ENCODE measurements at regions of chrX and their contacts with region 1.

Region 1: DNA sequence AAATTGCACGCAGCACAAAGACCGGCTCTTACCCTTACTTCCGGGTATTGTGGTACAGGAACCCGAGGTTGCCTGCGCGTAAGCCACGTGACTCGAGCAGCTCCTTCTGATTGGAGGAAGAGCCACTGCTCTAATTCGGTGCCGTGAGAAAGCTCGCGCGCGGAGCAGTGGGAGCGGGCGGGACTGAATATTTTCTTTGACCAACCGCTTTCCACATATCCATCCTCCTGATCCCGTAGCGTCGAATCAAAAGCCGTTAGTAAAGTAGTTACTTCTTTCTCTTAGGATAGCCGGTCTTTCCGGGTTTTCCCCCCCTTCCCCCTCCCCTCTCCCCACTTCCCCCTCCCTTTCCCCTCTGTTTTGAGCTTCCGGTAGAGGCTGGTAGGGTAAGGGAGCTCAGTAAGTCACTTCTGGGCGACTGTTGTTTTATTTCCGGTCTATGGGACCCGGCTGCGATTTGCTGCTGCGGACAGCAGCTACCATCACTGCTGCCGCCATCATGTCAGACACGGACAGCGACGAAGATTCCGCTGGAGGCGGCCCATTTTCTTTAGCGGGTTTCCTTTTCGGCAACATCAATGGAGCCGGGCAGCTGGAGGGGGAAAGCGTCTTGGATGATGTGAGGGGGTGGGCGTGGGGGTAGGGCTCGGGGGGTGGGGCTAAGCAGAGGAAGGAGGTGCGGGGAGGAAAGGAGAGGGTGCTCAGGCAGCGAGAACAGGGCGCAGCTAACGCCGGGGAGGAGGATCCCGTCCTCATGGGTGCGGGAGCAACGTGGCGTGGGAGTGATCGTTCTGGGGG is at the start of gene TAF1:
- DNase-seq: peak; percentile 74 to 97 (median 90)
- ATAC-seq: peak; percentile 89 to 91
- H3K4me3 Mint-ChIP-seq: peak within 1 kb of the TSS; percentile 90 to 99 (median 98)
- H3K27ac Mint-ChIP-seq: peak within 1 kb of the TSS; percentile 95 to 100 (median 99)
- H3K4me1 Mint-ChIP-seq: peaks cover 17 to 32% (median 26%) of the 10 kb centered on the region in 4 donors
- H3K27me3 Mint-ChIP-seq: no peaks in the 10 kb centered on the region
- polyA plus RNA-seq, gene TAF1: 4.3 to 10.2 (median 9.9) TPM

Region 2: GRCh38 chrX:71068049-71068763 is 297.9 kb before region 1 on chrX and contains the start of gene SNX12:
- POLR2A ChIA-PET with region 1: interaction called, 12 read pairs
- DNase-seq: peak; percentile 69 to 94 (median 88)
- ATAC-seq: peak; percentile 90 to 95
- H3K4me3 Mint-ChIP-seq: peak within 1 kb of the TSS; percentile 84 to 97 (median 96)
- H3K27ac Mint-ChIP-seq: peak within 1 kb of the TSS; percentile 85 to 99 (median 98)
- H3K4me1 Mint-ChIP-seq: peaks cover 16 to 28% (median 22%) of the 10 kb centered on the region in 4 donors
- H3K27me3 Mint-ChIP-seq: no peaks in the 10 kb centered on the region
- polyA plus RNA-seq, gene SNX12: 2.4 to 4.2 (median 3.7) TPM

Region 3: GRCh38 chrX:71118032-71118984 is 247.8 kb before region 1 on chrX and contains the start of gene MED12:
- POLR2A ChIA-PET with region 1: interaction called, 11 read pairs
- DNase-seq: peak; percentile 69 to 88 (median 78)
- ATAC-seq: peak; percentile 94 to 96
- H3K4me3 Mint-ChIP-seq: peak within 1 kb of the TSS; percentile 82 to 94 (median 87)
- H3K27ac Mint-ChIP-seq: peak within 1 kb of the TSS; percentile 88 to 97 (median 94)
- H3K4me1 Mint-ChIP-seq: peaks cover 7 to 37% (median 30%) of the 10 kb centered on the region in 4 donors
- H3K27me3 Mint-ChIP-seq: no peaks in the 10 kb centered on the region
- polyA plus RNA-seq, gene MED12: 6.6 to 17.0 (median 10.2) TPM

Region 4: GRCh38 chrX:71254092-71254941 is 111.8 kb before region 1 on chrX and contains the start of gene ZMYM3:
- POLR2A ChIA-PET with region 1: interaction called, 84 read pairs
- DNase-seq: peak; percentile 68 to 93 (median 84)
- ATAC-seq: peak; percentile 82 to 84
- H3K4me3 Mint-ChIP-seq: peak within 1 kb of the TSS; percentile 84 to 98 (median 93)
- H3K27ac Mint-ChIP-seq: peak within 1 kb of the TSS; percentile 89 to 98 (median 97)
- H3K4me1 Mint-ChIP-seq: peaks cover 13 to 32% (median 23%) of the 10 kb centered on the region in 4 donors
- H3K27me3 Mint-ChIP-seq: no peaks in the 10 kb centered on the region
- polyA plus RNA-seq, gene ZMYM3: 4.8 to 6.5 (median 5.0) TPM

Region 5: DNA sequence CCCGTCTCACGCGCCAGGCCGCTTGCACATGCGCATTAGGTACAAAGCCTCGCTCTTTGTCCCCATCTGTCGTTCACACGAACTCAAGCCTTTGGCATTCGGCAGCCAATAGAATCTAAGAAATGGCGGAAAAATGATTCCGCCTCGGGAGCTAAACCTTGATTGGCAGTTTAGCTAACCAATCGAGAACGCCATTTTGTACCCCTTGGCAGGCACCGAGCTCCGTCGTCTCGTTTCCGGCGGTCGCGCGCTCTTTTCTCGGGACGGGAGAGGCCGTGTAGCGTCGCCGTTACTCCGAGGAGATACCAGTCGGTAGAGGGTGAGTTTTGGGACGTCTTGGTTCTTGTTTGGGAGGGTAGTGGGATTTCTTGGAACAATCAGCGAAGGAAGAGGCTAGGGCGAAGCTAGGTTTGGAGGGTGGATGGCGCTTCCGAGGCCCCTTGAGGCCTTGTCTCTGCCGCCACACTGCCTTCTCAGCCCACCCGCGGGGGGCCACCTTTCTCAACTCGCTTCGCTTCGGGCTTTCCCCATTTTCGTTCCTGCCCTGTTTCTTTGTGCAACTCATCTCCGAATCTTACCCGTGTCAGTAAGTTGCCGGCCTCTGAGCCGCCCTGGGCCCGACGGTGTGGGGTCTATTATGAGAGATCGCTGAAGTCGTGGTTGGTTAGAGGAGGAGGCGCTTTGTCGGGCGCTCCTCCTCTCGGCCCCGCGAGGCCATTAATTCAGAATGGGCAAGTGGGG is 82.5 kb before region 1 on chrX and contains the start of gene NONO:
- POLR2A ChIA-PET with region 1: interaction called, 51 read pairs
- DNase-seq: peak; percentile 61 to 96 (median 86)
- ATAC-seq: peak; percentile 88 to 90
- H3K4me3 Mint-ChIP-seq: peak within 1 kb of the TSS; percentile 96 to 100 (median 99)
- H3K27ac Mint-ChIP-seq: peak within 1 kb of the TSS; percentile 99 to 100 (median 100)
- H3K4me1 Mint-ChIP-seq: peaks cover 1 to 32% (median 12%) of the 10 kb centered on the region in 4 donors
- H3K27me3 Mint-ChIP-seq: no peaks in the 10 kb centered on the region
- polyA plus RNA-seq, gene NONO: 177 to 199 (median 193) TPM

Measured in naive thymus-derived CD8-positive, alpha-beta T cell (primary cell).